ENCODE measurements at regions of chr18 and their contacts with region 1.

Region 1: DNA sequence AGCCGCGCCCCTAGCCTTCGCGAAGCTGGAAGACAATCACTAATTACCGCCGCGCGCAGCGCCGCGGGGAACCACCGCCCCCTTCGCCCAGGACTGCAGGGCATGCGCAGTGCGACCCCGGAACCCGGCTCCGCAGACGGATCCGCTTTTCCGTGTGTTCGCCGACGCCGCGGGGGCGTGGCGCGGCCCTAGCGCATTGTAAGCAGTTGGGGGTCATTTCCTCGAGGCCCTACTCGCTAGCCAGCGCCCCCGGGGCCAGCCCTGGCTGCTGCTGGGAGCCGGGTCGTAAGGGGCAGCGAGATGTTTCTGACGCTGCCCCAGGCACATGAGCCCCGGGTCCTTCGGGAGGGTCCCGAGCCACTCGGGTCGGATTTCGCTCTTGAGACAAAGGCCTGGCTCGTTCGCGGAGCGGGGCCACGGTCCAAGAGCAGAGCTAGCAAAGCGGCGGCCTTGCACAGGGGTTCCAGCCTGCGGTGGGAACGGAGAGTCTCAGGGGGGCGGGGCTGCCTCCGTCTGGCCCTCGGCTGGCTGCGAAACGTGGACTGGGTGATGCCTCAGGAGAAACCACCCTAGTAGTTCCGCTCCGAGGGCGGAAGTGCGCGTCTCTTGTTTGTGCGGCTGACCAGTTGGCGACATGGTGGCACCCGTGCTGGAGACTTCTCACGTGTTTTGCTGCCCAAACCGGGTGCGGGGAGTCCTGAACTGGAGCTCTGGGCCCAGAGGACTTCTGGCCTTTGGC is at the starts of genes ELP2 and SLC39A6:
- DNase-seq: peak; percentile 93
- H3K4me3 Mint-ChIP-seq: peak within 1 kb of the TSS; percentile 89
- H3K27ac Mint-ChIP-seq: peak within 1 kb of the TSS; percentile 91
- H3K4me1 Mint-ChIP-seq: peaks cover 53% of the 10 kb centered on the region
- H3K27me3 Mint-ChIP-seq: no peaks in the 10 kb centered on the region
- total RNA-seq, gene ELP2: 97.1 and 104 TPM in 2 replicates
- total RNA-seq, gene SLC39A6: 53.5 and 54.4 TPM in 2 replicates

Region 2: GRCh38 chr18:35580701-35581539 is 548.5 kb before region 1 on chr18:
- intact Hi-C with region 1: loop called (anchors 5 kb)
- DNase-seq: peak; percentile 44
- H3K4me3 Mint-ChIP-seq: peak overlapping the region; percentile 76
- H3K27ac Mint-ChIP-seq: no peak overlapping the region
- H3K4me1 Mint-ChIP-seq: peaks cover 33% of the 10 kb centered on the region
- H3K27me3 Mint-ChIP-seq: peaks cover 3% of the 10 kb centered on the region

Region 3: GRCh38 chr18:35979112-35979511 is 150.4 kb before region 1 on chr18:
- intact Hi-C with region 1: loop called (anchors 5 kb)
- DNase-seq: no peak
- H3K4me3 Mint-ChIP-seq: no peak overlapping the region
- H3K27ac Mint-ChIP-seq: no peak overlapping the region
- H3K4me1 Mint-ChIP-seq: peaks cover 14% of the 10 kb centered on the region
- H3K27me3 Mint-ChIP-seq: no peaks in the 10 kb centered on the region

Region 4: GRCh38 chr18:36015629-36016028 is 113.8 kb before region 1 on chr18:
- intact Hi-C with region 1: loop called (anchors 2 kb)
- DNase-seq: no peak
- H3K4me3 Mint-ChIP-seq: no peak overlapping the region
- H3K27ac Mint-ChIP-seq: no peak overlapping the region
- H3K4me1 Mint-ChIP-seq: no peaks in the 10 kb centered on the region
- H3K27me3 Mint-ChIP-seq: no peaks in the 10 kb centered on the region

Region 5: DNA sequence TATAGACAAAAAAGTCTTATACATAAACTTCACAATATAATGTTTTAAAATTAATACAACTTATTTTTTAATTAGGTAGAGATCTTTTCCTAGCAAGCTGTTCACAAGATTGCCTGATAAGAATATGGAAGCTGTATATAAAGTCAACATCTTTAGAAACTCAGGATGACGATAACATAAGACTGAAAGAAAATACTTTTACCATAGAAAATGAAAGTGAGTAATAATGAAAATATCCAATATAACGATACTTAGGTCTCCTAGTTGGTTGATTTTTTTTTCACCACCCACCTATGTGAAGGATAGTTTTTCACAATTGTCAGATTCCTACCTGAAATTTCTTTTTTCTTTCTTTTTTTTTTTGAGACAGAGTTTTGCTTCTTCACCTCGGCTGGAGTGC is 13.3 kb after region 1 on chr18:
- intact Hi-C with region 1: loop called (anchors 2 kb)
- DNase-seq: no peak
- H3K4me3 Mint-ChIP-seq: no peak overlapping the region
- H3K27ac Mint-ChIP-seq: no peak overlapping the region
- H3K4me1 Mint-ChIP-seq: peaks cover 17% of the 10 kb centered on the region
- H3K27me3 Mint-ChIP-seq: no peaks in the 10 kb centered on the region

Region 6: GRCh38 chr18:36186911-36187834 is 57.7 kb after region 1 on chr18 and contains the start of gene MOCOS:
- intact Hi-C with region 1: loop called (anchors 1 kb)
- DNase-seq: peak; percentile 43
- H3K4me3 Mint-ChIP-seq: peak within 1 kb of the TSS; percentile 82
- H3K27ac Mint-ChIP-seq: no peak within 1 kb of the TSS
- H3K4me1 Mint-ChIP-seq: peaks cover 7% of the 10 kb centered on the region
- H3K27me3 Mint-ChIP-seq: peaks cover 20% of the 10 kb centered on the region
- total RNA-seq, gene MOCOS: 0.17 and 0.47 TPM in 2 replicates

Region 7: DNA sequence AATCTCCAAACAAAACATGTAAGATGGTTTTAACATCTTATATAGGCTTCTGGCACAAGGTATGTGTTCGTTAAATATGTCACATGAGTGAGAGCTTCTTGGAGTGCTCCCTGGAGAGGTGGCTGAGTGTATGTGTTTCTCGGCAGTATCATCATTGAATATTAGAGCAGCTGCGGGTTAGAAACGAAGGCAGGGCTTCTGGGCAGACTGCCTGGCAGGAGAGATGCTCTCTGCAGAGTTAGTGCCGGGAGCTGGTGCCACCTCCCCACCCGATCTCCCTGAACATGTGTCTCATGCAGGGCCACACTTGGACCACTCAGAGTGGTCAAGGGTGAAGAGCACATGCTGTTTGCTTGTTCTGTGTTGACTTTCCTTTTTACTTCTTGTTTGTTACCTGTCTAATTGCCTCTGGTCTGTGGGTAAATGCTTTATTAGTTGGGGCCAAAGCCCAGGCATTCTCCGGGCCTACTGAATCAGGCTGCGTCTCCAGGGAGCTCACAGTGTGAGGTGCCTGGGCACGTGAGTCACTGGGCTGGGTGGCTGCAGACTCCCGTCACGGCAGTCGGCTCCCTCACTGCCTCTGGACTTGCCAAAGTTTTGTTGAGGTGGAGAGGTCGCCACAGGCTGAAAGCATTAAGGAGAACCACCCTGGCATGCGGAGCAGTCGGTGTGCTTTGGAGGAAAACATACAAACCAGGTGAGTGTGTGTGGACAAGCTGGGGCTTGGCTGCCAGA is 414.7 kb after region 1 on chr18:
- intact Hi-C with region 1: no loop called
- DNase-seq: no peak
- H3K4me3 Mint-ChIP-seq: no peak overlapping the region
- H3K27ac Mint-ChIP-seq: no peak overlapping the region
- H3K4me1 Mint-ChIP-seq: no peaks in the 10 kb centered on the region
- H3K27me3 Mint-ChIP-seq: no peaks in the 10 kb centered on the region

Region 8: DNA sequence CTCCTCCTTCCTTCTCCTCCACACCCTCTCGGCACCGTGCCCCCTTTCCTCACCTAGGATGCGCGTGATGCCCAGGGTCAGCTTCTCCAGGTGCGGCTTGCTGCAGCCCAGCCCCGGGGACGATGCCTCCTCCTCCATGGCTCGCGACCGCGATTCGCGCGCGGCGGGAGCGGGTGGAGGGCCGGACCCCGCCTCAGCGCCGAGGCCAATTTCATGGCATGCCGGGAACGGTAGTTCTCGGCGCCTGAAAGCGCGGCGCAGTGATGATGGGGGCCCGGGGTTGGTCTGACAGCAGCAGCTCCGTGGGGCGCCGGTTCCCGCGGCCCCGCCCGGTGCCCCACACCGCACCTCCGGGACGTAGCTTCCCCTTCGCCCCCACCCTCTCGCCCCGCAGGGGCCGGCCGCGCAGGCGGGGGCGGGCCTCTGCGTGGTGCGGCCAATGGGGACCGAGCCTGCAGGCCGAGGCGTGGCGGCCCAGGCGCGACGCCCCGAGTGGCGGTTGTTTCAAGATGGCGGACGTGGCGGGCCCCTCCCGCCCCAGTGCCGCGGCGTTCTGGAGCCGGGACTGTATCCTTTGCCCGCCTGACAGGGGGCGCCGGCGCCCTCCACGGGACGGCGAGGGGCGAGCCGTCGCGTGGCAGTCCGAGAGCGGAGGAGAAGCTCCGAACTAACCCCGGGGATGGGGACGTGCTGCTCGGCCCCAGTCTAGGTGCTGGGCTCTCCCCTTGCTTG is 699.3 kb after region 1 on chr18 and contains the starts of genes KIAA1328 and TPGS2:
- intact Hi-C with region 1: loop called (anchors 1 kb)
- DNase-seq: peak; percentile 88
- H3K4me3 Mint-ChIP-seq: peak within 1 kb of the TSS; percentile 86
- H3K27ac Mint-ChIP-seq: peak within 1 kb of the TSS; percentile 94
- H3K4me1 Mint-ChIP-seq: peaks cover 51% of the 10 kb centered on the region
- H3K27me3 Mint-ChIP-seq: no peaks in the 10 kb centered on the region
- total RNA-seq, gene KIAA1328: 6.7 and 8.2 TPM in 2 replicates
- total RNA-seq, gene TPGS2: 68.5 and 72.6 TPM in 2 replicates